ENCODE measurements at regions of chr9 and their contacts with region 1.

Region 1: GRCh38 chr9:133737774-133738639 is at the start of gene SARDH:
- DNase-seq: peak; percentile 47
- ATAC-seq: peak; percentile 95
- H3K4me3 ChIP-seq: peak within 1 kb of the TSS; percentile 43
- H3K27ac ChIP-seq: no peak within 1 kb of the TSS
- H3K4me1 ChIP-seq: peaks cover 5% of the 10 kb centered on the region; the same call in 1 of the 2 replicates
- H3K27me3 ChIP-seq: peaks cover 4% of the 10 kb centered on the region; the same call in 1 of the 2 replicates
- CTCF ChIP-seq: no peak
- POLR2A ChIP-seq: no peak
- RAD21 ChIP-seq: no peak
- total RNA-seq, gene SARDH: 4.7 and 5.0 TPM in 2 replicates

Region 2: DNA sequence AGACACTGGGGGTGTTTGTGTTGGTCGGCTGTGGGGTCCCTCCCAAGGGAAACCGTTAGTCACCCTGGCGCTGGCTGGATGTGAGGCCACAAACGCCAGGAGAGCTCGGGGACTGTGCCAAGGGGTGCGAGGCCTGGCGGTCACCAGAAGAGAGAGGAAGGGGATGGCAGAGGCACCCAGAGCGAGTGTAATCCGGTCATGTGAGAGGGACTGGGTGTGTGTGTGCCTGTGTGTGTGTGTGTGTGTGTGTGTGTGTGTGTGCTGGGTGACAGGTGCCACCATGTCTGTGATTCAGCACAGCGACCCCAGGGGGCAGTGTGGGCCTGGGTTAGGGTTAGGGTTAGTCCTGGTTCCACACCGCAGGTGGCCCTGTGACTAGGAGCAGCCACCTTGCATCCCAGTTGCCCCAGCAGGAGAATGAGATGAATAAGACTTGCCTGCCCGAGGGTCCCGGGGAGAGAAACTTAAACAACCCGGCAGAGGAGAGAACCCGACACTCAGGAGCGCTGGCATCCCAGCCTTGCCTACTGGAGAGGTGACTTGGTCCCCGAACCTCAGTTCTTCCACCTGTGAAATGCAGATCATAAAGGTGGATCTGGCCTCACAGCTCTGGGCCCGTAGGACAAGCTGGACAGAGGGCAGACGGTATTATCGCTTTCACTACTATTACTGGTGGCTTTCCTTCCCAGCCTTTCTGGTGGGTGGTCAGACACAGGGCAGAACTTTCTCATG is 204.9 kb before region 1 on chr9:
- CTCF ChIA-PET with region 1: no interaction called
- POLR2A ChIA-PET with region 1: no interaction called
- dilution Hi-C with region 1: no loop called
- in situ Hi-C with region 1: loop called (anchors 10 kb)
- intact Hi-C with region 1: no loop called
- DNase-seq: peak; percentile 29
- ATAC-seq: peak; percentile 38; the same call in 1 of the 2 replicates
- H3K4me3 ChIP-seq: no peak overlapping the region
- H3K27ac ChIP-seq: no peak overlapping the region
- H3K4me1 ChIP-seq: peaks cover 1% of the 10 kb centered on the region; the same call in 1 of the 2 replicates
- H3K27me3 ChIP-seq: peaks cover 64% of the 10 kb centered on the region
- CTCF ChIP-seq: peak; percentile 58
- POLR2A ChIP-seq: no peak
- RAD21 ChIP-seq: peak; percentile 78

Measured in IMR-90 (cell line).